ENCODE measurements at regions of chr13 and their contacts with region 1.

Region 1: GRCh38 chr13:20461481-20461859 is 64.2 kb downstream of the CRYL1 start:
- DNase-seq: no peak
- H3K4me3 Mint-ChIP-seq: peak overlapping the region; percentile 64
- H3K27ac Mint-ChIP-seq: peak overlapping the region; percentile 90
- H3K4me1 Mint-ChIP-seq: peaks cover 19% of the 10 kb centered on the region
- H3K27me3 Mint-ChIP-seq: peaks cover 4% of the 10 kb centered on the region

Region 2: DNA sequence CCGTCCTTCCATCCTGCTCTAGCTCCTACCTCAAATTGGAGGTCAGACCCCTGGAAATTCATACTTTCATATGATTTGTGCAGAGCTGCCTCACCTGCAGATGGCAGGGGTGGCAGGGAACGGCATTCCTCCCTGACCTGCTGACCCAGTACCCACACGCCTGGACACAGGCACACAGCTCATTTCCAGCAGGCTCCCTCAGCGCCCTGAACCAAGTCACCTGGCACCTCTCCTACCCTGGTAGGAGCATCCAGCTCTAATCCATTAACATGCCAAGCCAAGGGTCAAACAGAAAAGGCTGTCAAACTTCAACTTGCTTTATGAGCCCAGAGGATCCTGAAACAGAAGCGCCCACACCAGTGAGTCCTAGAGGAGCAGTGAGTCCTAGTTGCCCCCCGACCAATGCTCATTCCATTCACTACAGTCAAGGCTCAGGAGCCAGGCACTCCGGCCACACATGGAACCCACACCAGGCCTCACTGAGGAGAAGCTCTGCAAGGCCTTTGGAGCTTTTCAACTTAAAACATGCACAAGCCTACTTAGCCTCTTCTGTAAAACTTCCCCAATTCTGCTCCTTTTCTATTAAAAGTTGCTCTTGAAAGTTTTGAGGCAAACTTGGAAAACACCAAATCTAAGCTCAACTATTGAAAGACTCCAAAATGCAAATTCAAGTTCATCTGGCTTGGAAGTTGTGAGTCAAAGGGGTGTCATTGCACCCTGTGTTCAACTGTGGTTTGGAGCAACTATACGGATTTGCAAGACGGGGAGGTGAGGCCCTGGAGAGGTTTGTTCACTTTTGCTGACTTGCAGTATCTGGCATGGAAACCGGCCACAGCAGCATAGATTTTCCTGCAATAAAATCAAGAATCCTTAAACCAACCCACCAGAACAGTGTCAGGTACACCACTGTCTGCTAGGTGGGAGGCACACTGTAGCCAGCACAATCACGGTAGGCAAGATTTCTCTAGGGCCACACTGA is 32.5 kb before region 1 on chr13:
- intact Hi-C with region 1: loop called (anchors 2 kb)
- DNase-seq: peak; percentile 55
- H3K4me3 Mint-ChIP-seq: no peak overlapping the region
- H3K27ac Mint-ChIP-seq: peak overlapping the region; percentile 27
- H3K4me1 Mint-ChIP-seq: peaks cover 43% of the 10 kb centered on the region
- H3K27me3 Mint-ChIP-seq: peaks cover 1% of the 10 kb centered on the region

Region 3: DNA sequence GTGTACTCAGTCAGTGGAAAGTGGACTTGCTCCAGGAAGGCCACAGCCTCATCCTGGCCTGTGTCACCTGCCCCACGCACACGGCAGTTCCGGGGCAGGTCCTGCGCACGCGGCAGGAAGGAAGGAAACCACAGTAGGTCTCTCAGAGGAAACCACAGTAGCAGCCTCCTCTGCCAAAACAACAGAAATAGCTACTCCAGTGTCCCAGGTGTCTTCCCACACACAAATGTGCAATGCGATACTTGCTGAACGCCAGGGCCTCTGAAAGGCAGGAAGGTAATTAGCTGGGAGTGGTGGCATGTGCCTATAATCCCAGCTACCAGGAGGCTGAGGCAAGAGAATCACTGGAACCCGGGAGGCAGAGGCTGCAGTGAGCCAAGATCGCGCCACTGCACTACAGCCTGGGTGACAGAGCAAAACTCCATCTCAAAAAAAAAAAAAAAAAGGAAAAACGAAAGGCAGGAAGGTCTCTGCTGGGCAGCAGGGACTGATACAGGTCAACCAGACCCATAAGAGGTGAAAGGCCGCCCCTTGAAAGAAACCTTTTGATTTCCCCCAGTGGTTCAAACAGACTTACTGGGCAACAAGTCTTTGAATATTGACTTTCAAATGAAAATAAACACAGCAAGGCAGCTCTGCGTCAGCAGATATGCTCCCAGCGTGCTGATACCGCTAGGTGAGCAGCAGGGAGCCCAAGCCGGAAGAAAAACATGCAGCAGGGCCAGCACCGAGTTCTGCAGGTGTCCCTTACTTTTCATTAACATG is 14.6 kb after region 1 on chr13:
- intact Hi-C with region 1: loop called (anchors 1 kb)
- DNase-seq: peak; percentile 90
- H3K4me3 Mint-ChIP-seq: peak overlapping the region; percentile 74
- H3K27ac Mint-ChIP-seq: peak overlapping the region; percentile 86
- H3K4me1 Mint-ChIP-seq: peaks cover 42% of the 10 kb centered on the region
- H3K27me3 Mint-ChIP-seq: peaks cover 1% of the 10 kb centered on the region

Region 4: DNA sequence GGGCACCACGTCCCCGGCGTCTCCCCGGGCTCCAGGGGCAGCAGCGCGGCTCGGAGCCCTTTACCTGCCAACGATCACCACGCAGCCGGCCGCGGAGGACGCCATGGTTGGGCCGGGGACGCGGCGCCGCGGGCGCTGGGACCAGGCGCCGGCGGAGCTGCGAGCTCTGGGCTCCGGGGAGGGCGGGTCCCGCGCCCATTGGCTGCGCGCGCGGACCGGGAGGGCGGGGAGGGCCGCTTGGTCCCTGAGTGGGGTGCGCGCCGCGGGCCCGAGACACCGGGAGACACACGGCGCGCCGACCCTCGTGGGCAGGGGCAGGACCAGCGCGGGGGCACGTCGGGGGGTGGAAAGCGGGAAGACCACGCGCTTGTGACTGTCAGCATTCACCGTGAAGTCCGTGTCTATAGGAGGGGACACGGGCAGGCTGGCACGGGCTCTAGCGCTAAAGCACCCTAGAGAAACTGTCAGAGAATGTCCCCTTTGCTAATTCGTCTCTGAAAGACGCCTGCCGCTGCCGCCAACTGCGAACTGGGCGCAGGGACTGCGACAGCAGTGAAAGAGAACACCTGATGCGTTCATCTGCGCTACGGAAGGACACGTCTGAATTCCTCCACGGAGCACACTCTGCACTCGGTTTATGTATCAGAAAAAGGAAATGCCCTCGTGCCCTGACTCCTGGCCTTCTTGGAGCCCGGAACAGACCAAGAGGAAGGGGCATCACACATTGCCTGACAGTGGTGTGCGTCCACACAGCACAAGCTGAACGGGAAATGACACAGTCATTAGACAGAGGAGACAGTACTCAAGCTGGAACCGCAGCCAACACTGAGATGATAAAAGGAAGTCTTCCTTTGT is 64.4 kb after region 1 on chr13 and contains the start of gene CRYL1:
- intact Hi-C with region 1: no loop called
- DNase-seq: peak; percentile 92
- H3K4me3 Mint-ChIP-seq: peak within 1 kb of the TSS; percentile 79
- H3K27ac Mint-ChIP-seq: peak within 1 kb of the TSS; percentile 79
- H3K4me1 Mint-ChIP-seq: peaks cover 19% of the 10 kb centered on the region
- H3K27me3 Mint-ChIP-seq: no peaks in the 10 kb centered on the region
- total RNA-seq, gene CRYL1: 5.8 and 7.1 TPM in 2 replicates

Region 5: GRCh38 chr13:20997430-20998161 is 536.1 kb after region 1 on chr13:
- intact Hi-C with region 1: no loop called
- DNase-seq: no peak
- H3K4me3 Mint-ChIP-seq: no peak overlapping the region
- H3K27ac Mint-ChIP-seq: no peak overlapping the region
- H3K4me1 Mint-ChIP-seq: peaks cover 4% of the 10 kb centered on the region
- H3K27me3 Mint-ChIP-seq: peaks cover 7% of the 10 kb centered on the region

Measured in activated CD4-positive, alpha-beta T cell treated with anti-CD3 and anti-CD28 coated beads, Interleukin-2, amount 10 ng/mL, durations not matched to agents 24 days and 14 days (primary cell).